A673 (cell line): ENCODE measurements at regions of chr20 and their contacts with region 1.

Region 1: DNA sequence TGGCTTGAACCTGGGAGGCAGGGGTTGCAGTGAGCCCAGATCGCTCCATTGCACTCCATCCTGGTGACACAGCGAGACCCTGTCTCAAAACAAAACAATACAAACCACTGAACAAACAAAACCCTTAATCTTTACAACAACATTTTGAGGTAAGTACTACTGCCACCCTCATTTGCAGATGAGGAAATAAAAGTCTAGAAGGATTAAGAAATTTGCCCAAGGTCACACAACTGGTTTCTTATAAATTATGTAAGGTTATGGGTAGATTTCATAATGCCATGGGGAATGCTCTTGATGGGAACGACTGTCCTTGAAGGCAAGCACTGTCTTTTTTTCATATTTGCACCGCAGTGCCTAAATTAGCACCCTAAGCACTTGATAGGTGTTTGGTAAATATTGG is 13.8 kb upstream of the B4GALT5 start:
- DNase-seq: no peak
- H3K4me3 ChIP-seq: no peak overlapping the region
- H3K27ac ChIP-seq: no peak overlapping the region
- H3K4me1 ChIP-seq: no peaks in the 10 kb centered on the region
- H3K27me3 ChIP-seq: no peaks in the 10 kb centered on the region
- CTCF ChIP-seq: no peak

Region 2: GRCh38 chr20:49424536-49424935 is 302.9 kb before region 1 on chr20:
- CTCF ChIA-PET with region 1: no interaction called
- POLR2A ChIA-PET with region 1: no interaction called
- intact Hi-C with region 1: no loop called
- DNase-seq: peak; percentile 9
- H3K4me3 ChIP-seq: no peak overlapping the region
- H3K27ac ChIP-seq: no peak overlapping the region
- H3K4me1 ChIP-seq: no peaks in the 10 kb centered on the region
- H3K27me3 ChIP-seq: peaks cover 18% of the 10 kb centered on the region
- CTCF ChIP-seq: no peak

Region 3: GRCh38 chr20:49808753-49809152 is 81.3 kb after region 1 on chr20:
- CTCF ChIA-PET with region 1: no interaction called
- POLR2A ChIA-PET with region 1: interaction called, 10 read pairs
- intact Hi-C with region 1: no loop called
- DNase-seq: no peak
- H3K4me3 ChIP-seq: no peak overlapping the region
- H3K27ac ChIP-seq: no peak overlapping the region
- H3K4me1 ChIP-seq: peaks cover 10% of the 10 kb centered on the region
- H3K27me3 ChIP-seq: no peaks in the 10 kb centered on the region
- CTCF ChIP-seq: no peak